ENCODE measurements at regions of chr15 and their contacts with region 1.

Region 1: DNA sequence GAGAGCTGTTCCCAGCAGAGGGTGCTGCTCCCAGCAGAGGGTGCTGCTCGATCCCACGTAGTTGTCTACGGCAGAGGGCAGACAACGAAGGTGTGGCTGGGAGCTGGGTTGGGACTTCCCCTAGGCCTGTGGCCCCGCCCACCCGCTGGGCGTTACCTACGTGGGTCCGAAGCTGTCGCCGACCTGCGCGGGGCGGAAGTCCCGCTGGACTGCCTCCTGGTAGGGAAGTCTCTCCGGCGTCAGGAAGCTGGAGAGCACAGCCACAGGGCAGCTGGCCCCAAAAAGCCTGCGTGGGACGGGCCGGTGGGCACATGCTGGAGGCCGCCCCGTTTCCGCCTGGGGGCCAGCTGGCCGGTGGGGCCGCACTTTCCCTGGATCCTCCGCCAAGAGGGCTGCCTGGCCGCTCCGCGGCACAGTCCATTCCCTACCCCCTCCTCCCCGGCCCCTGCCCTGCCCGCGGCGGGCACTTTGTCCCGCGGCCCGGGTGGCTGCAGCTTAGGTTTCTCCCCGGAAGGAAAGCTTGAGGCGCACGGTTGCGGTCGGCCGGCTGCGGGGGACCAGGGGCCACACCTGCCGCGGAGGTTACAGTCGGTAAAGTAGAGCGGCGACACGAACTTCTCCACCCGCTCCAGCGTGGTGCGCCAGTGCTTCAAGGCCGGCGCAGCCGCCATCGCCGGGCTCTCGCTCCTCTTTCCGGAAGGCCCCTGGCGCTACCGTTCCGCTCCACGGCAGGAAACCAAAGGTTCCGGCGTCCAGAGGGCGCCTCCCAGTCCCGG is at the start of gene MAN2C1:
- DNase-seq: peak; percentile 80 to 94 (median 86)
- ATAC-seq: peak; percentile 91 to 94
- H3K4me3 Mint-ChIP-seq: peak within 1 kb of the TSS; percentile 84 to 94 (median 90)
- H3K27ac Mint-ChIP-seq: peak within 1 kb of the TSS; percentile 85 to 96 (median 95)
- H3K4me1 Mint-ChIP-seq: peaks cover 8 to 25% (median 20%) of the 10 kb centered on the region in 4 donors
- H3K27me3 Mint-ChIP-seq: no peaks in the 10 kb centered on the region
- polyA plus RNA-seq, gene MAN2C1: 20.4 to 29.8 (median 28.7) TPM

Region 2: DNA sequence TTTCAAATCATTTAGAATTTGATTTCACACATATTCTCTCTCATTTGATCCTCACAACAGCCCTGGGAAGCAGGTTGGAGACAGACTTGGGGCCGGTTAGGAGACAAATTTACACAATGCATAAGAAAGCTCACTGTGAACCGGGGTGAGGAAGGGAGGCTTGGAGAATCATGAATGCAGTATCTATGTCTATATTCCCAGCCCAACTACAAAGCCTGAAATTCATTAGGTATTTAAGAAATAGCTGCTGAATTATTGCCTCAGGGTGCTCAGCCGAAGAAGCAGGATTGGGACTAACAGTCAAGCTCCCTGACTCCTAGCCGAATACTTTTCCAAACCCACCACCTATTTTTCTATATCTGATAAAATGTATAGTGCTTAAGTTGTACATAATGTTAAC is 118.4 kb before region 1 on chr15:
- POLR2A ChIA-PET with region 1: no interaction called
- DNase-seq: no peak
- ATAC-seq: no peak
- H3K4me3 Mint-ChIP-seq: no peak overlapping the region
- H3K27ac Mint-ChIP-seq: no peak overlapping the region
- H3K4me1 Mint-ChIP-seq: no peaks in the 10 kb centered on the region
- H3K27me3 Mint-ChIP-seq: peaks cover 5 to 17% (median 7%) of the 10 kb centered on the region in 5 donors

Region 3: DNA sequence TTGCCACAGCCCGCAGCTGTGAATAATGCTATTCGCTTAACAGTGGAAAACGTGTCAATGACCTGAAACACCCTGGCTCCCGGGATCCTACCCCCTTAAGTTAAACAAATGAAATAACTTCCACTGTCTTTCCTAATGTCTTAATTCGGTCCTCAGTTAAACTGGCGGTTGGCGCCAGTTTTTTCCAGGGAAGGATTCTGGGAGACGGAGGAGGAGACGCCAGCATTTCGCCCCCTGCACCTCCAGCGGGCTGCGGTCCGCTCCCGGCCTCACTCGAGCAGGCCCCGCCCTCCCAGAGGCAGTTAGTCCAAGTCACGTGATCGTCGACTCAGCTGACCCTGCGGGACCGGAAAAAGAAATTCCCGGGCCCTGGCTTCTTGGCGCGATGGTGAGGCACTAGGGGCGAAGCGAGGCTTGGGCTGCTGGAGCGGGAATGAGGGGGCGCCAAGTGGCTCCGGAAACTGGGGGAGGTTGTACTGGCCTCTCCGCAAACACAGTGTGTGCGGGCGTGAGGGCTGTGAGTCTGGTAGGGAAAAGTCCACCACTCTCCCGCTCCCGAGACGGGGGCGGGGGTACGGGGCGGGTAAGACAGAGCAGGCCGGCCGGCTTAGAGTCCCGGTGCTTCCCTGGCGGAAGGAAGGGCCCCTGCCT is 32.3 kb before region 1 on chr15 and contains the start of gene COMMD4:
- POLR2A ChIA-PET with region 1: interaction called, 10 read pairs
- DNase-seq: peak; percentile 41 to 81 (median 56)
- ATAC-seq: peak; percentile 69 to 88
- H3K4me3 Mint-ChIP-seq: peak within 1 kb of the TSS; percentile 86 to 95 (median 89)
- H3K27ac Mint-ChIP-seq: peak within 1 kb of the TSS; percentile 68 to 93 (median 84)
- H3K4me1 Mint-ChIP-seq: peaks cover 14 to 28% (median 21%) of the 10 kb centered on the region in 4 donors
- H3K27me3 Mint-ChIP-seq: peaks cover 0 to 2% (median 0%) of the 10 kb centered on the region in 5 donors
- polyA plus RNA-seq, gene COMMD4: 27.2 to 42.5 (median 40.8) TPM

Region 4: DNA sequence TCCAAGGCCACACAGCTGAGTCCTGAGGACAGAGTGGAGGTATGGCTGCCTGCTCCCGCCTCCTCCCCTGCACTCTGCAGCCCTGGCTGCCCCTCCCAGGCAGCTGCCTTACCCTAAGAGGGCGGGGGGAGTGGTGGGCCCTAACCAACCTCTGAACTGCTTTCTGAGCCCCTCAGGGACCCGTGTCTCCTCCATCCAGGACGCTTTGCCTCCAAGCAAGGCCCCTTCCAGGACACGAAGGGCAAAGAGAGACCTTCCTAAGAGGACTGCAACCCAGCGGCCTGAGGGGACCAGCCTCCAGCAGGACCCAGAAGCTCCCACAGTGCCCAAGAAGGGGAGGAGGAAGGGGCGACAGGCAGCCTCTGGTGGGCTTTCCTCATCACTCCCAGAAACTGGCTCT is 13.6 kb before region 1 on chr15:
- POLR2A ChIA-PET with region 1: interaction called, 76 read pairs
- DNase-seq: no peak
- ATAC-seq: no peak
- H3K4me3 Mint-ChIP-seq: no peak overlapping the region
- H3K27ac Mint-ChIP-seq: peak overlapping the region in 8 of 10 donors; percentile 32 to 88 (median 66)
- H3K4me1 Mint-ChIP-seq: peaks cover 9 to 20% (median 16%) of the 10 kb centered on the region in 4 donors
- H3K27me3 Mint-ChIP-seq: peaks cover 0 to 3% (median 0%) of the 10 kb centered on the region in 5 donors

Region 5: DNA sequence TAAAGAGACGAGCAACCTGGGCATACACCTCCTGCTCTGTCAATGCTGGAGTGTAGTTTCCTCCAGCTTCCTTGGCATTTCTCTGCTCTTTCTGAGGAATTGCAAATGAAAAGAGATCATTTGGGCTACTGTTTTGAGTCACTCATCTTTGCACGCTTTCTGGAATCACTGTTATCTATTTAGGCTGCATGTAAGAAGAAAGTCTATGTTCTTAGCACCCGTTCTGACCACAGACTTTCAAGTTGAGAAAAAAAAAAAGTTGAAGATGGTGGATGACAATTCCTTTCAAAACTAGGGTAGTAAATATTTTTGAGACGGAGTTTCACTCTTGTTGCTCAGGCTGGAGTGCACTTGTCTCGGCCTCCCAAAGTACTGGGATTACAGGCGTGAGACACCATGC is 42.1 kb after region 1 on chr15:
- POLR2A ChIA-PET with region 1: no interaction called
- DNase-seq: no peak
- ATAC-seq: no peak
- H3K4me3 Mint-ChIP-seq: no peak overlapping the region
- H3K27ac Mint-ChIP-seq: peak overlapping the region in 1 of 10 donors; percentile 20
- H3K4me1 Mint-ChIP-seq: peaks cover 2 to 19% (median 10%) of the 10 kb centered on the region in 4 donors
- H3K27me3 Mint-ChIP-seq: no peaks in the 10 kb centered on the region

Region 6: DNA sequence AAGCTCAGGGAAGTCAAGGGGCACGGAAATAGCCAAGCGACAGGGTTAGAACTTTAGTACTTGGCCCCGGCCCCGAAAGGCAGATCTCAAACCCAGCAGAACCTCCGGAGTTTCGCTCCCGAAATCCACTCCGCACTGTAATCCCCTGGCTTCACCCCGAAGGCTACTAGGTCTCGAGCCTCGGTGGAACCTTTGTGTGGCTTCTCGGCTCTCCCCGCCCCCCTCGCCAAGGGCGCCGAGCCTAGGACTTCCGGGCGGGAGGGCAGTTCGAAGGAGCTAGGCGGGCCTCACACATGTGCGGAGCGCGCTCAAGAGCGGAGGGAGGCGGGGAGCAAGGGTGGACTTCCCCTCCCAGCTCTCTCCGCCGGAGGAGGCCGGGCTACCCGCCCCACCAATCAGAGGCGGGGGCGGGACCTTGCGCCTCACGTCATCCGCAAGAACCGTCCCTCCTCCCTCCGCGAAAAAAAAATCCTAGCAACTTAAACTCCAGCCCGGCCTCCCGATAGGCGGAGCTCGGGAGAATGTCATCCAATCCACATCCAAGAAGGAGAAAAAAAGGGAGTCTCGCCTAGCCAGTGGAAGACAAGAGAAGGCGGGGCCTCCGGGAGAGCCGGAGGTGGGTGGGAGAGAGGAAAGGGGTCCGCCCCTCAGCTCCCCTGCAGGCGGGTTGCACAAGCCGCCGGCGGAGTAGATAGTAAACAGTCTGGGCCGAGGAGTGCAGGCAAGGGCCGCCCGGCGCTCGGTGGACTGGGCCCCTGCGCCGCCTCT is 85.8 kb after region 1 on chr15:
- POLR2A ChIA-PET with region 1: interaction called, 166 read pairs
- DNase-seq: peak; percentile 94 to 100 (median 97)
- ATAC-seq: peak; percentile 40 to 41
- H3K4me3 Mint-ChIP-seq: peak overlapping the region; percentile 94 to 99 (median 97)
- H3K27ac Mint-ChIP-seq: peak overlapping the region; percentile 94 to 99 (median 98)
- H3K4me1 Mint-ChIP-seq: peaks cover 24 to 47% (median 37%) of the 10 kb centered on the region in 4 donors
- H3K27me3 Mint-ChIP-seq: no peaks in the 10 kb centered on the region

Region 7: GRCh38 chr15:75639709-75640482 is 271.8 kb after region 1 on chr15 and contains the start of gene IMP3:
- POLR2A ChIA-PET with region 1: interaction called, 87 read pairs
- DNase-seq: peak; percentile 84 to 95 (median 92)
- ATAC-seq: peak; percentile 89 to 91
- H3K4me3 Mint-ChIP-seq: peak within 1 kb of the TSS; percentile 89 to 96 (median 94)
- H3K27ac Mint-ChIP-seq: peak within 1 kb of the TSS; percentile 49 to 99 (median 96)
- H3K4me1 Mint-ChIP-seq: peaks cover 19 to 47% (median 45%) of the 10 kb centered on the region in 4 donors
- H3K27me3 Mint-ChIP-seq: no peaks in the 10 kb centered on the region
- polyA plus RNA-seq, gene IMP3: 199 to 256 (median 238) TPM

Region 8: DNA sequence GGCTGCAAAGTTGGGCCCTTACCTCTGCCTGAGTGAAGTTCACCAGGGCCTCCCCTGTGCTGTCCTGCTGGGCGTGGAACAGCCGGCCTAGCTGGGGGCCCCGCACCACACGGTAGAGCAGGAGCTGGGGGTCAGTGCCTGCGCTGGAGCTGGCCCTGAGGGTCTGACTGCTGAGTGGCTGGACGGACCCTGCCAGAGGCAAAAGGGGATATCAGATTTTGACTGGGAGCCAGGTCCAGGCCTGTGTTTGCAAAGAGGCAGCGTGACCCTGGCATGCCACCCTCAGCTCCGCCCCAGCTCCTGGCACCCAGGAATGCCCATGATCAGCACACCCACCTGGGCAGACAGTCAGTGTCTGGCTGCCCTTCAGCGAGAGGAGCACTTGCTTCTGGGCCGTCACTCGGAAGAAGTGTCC is 314.2 kb after region 1 on chr15:
- POLR2A ChIA-PET with region 1: interaction called, 13 read pairs
- DNase-seq: no peak
- ATAC-seq: no peak
- H3K4me3 Mint-ChIP-seq: no peak overlapping the region
- H3K27ac Mint-ChIP-seq: no peak overlapping the region
- H3K4me1 Mint-ChIP-seq: no peaks in the 10 kb centered on the region
- H3K27me3 Mint-ChIP-seq: no peaks in the 10 kb centered on the region

Measured in naive thymus-derived CD8-positive, alpha-beta T cell (primary cell).